ENCODE measurements at regions of chr11 and their contacts with region 1.

Region 1: GRCh38 chr11:10322830-10323792 is 18.2 kb downstream of the ADM start:
- DNase-seq: peak; percentile 93
- ATAC-seq: peak; percentile 71
- H3K4me3 ChIP-seq: peak overlapping the region; percentile 15; the same call in 1 of the 2 replicates
- H3K27ac ChIP-seq: peak overlapping the region; percentile 29
- H3K4me1 ChIP-seq: peaks cover 43% of the 10 kb centered on the region
- H3K27me3 ChIP-seq: no peaks in the 10 kb centered on the region
- CTCF ChIP-seq: peak; percentile 72

Region 2: DNA sequence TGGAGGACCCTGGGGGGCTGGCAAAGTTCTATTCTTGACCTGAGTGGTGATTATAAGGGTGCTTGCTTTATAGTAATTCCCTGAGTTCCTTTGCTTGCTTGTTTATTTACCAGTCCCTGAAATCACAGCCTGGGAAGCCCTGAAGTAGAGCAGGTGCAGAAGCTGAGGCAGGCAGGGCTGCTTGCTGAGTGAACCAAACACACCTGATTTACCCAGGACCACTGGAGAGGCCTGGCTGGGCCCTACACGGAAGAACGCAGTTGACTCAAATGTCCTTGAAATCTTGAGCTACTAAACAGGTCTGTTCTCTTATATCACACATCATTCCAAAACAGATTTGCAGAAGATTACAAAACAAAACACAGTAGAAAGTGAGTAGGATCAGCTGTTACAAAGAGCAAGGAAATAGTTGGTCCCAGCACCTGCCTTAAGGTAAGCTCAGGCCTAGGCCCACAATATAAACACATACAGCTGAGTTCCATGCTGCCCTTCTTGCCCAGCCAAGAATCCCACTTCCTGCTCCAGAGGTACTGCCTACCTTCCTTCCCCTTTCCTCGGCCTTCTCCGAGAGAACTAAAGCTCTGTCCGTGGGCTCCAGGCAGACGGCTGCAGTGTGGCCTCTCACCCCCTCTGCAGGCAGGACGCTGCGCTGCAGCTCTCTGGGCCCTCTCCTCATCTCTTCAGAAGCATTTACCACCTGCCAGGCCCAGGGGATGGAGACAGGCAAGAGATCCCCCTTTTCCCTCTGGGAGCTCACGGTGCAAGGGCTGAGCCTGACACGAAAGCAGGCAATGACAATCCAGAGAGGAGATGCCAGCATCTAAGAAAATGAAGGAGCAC is 1185.6 kb before region 1 on chr11:
- CTCF ChIA-PET with region 1: no interaction called
- POLR2A ChIA-PET with region 1: no interaction called
- intact Hi-C with region 1: no loop called
- DNase-seq: peak; percentile 72
- ATAC-seq: peak; percentile 64
- H3K4me3 ChIP-seq: no peak overlapping the region
- H3K27ac ChIP-seq: no peak overlapping the region
- H3K4me1 ChIP-seq: peaks cover 27% of the 10 kb centered on the region
- H3K27me3 ChIP-seq: no peaks in the 10 kb centered on the region
- CTCF ChIP-seq: peak; percentile 94

Region 3: GRCh38 chr11:9320047-9320446 is 1003.1 kb before region 1 on chr11:
- CTCF ChIA-PET with region 1: no interaction called
- POLR2A ChIA-PET with region 1: no interaction called
- intact Hi-C with region 1: loop called (anchors 5 kb)
- DNase-seq: peak; percentile 66
- ATAC-seq: peak; percentile 66
- H3K4me3 ChIP-seq: no peak overlapping the region
- H3K27ac ChIP-seq: peak overlapping the region; percentile 38
- H3K4me1 ChIP-seq: peaks cover 13% of the 10 kb centered on the region
- H3K27me3 ChIP-seq: no peaks in the 10 kb centered on the region
- CTCF ChIP-seq: no peak

Region 4: DNA sequence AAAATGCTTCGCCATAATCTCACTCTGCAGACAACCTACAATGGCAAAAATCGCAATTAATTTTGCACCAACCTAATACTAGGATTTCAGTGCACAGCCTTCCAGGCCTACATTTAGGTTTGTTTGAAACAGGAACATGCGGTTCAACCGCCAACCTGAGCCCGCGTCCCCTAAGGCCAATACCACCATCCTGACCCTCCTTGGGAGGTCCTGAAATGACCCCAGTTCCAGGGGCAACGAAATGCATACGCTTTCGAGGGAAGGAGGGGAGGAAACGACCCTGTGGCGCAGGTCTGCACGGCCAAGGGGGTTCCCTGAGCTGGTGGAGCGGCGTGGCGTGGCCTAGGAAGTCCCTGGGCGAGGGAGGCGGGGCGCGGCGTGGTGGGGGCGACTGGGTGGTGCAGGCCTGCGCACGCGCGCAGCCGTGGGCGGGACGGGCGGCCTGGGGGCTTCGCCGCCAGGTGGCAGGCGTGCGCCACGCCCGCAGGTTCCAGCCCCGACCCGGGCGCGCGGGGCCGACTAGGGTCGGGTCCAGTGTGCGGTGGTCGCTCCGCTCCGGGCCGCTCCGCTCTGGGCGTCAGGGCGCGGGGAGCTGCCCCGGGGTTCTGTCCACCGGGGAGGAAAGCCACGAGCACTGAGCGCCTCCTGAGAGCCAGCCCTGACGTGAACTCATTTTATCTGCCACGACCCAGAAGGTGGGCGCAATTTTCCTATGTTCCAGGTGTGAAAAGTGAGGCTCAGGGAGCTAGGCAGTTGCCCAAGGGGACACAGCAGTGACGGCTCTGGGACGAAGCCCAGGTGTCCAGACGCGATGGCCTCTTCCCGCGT is 565.1 kb before region 1 on chr11:
- CTCF ChIA-PET with region 1: interaction called, 3 read pairs
- POLR2A ChIA-PET with region 1: no interaction called
- intact Hi-C with region 1: loop called (anchors 1 kb)
- DNase-seq: peak; percentile 76
- ATAC-seq: peak; percentile 39
- H3K4me3 ChIP-seq: peak overlapping the region; percentile 87
- H3K27ac ChIP-seq: peak overlapping the region; percentile 17; the same call in 1 of the 2 replicates
- H3K4me1 ChIP-seq: peaks cover 42% of the 10 kb centered on the region
- H3K27me3 ChIP-seq: no peaks in the 10 kb centered on the region
- CTCF ChIP-seq: peak; percentile 66

Region 5: GRCh38 chr11:9990221-9990975 is 332.7 kb before region 1 on chr11:
- CTCF ChIA-PET with region 1: no interaction called
- POLR2A ChIA-PET with region 1: no interaction called
- intact Hi-C with region 1: loop called (anchors 1 kb)
- DNase-seq: peak; percentile 71
- ATAC-seq: peak; percentile 98
- H3K4me3 ChIP-seq: no peak overlapping the region
- H3K27ac ChIP-seq: 0 out of 2 replicates have a peak overlapping the region, but pooled peaks have one; percentile 5
- H3K4me1 ChIP-seq: peaks cover 14% of the 10 kb centered on the region
- H3K27me3 ChIP-seq: no peaks in the 10 kb centered on the region
- CTCF ChIP-seq: peak; percentile 45

Region 6: GRCh38 chr11:10366568-10367370 is 43.7 kb after region 1 on chr11:
- CTCF ChIA-PET with region 1: interaction called, 6 read pairs
- POLR2A ChIA-PET with region 1: no interaction called
- intact Hi-C with region 1: loop called (anchors 2 kb)
- DNase-seq: peak; percentile 85
- ATAC-seq: peak; percentile 87
- H3K4me3 ChIP-seq: no peak overlapping the region
- H3K27ac ChIP-seq: no peak overlapping the region
- H3K4me1 ChIP-seq: peaks cover 6% of the 10 kb centered on the region
- H3K27me3 ChIP-seq: no peaks in the 10 kb centered on the region
- CTCF ChIP-seq: peak; percentile 88

Region 7: GRCh38 chr11:10405855-10406592 is 82.9 kb after region 1 on chr11:
- CTCF ChIA-PET with region 1: interaction called, 3 read pairs
- POLR2A ChIA-PET with region 1: no interaction called
- intact Hi-C with region 1: loop called (anchors 5 kb)
- DNase-seq: peak; percentile 87
- ATAC-seq: peak; percentile 41
- H3K4me3 ChIP-seq: no peak overlapping the region
- H3K27ac ChIP-seq: no peak overlapping the region
- H3K4me1 ChIP-seq: peaks cover 21% of the 10 kb centered on the region
- H3K27me3 ChIP-seq: no peaks in the 10 kb centered on the region
- CTCF ChIP-seq: peak; percentile 70

Measured in PC-3 (cell line).